ENCODE measurements at regions of chr14 and their contacts with region 1.

Region 1: GRCh38 chr14:60248697-60249318 is at the start of gene PPM1A:
- DNase-seq: peak; percentile 91 to 95 (median 93)
- ATAC-seq: peak; percentile 89
- H3K4me3 ChIP-seq: peak within 1 kb of the TSS; percentile 93
- H3K4me3 Mint-ChIP-seq: peak within 1 kb of the TSS; percentile 90 to 99 (median 96)
- H3K27ac ChIP-seq: peak within 1 kb of the TSS; percentile 100
- H3K27ac Mint-ChIP-seq: peak within 1 kb of the TSS; percentile 97 to 100 (median 100)
- H3K4me1 ChIP-seq: peaks cover 7 to 44% of the 10 kb centered on the region in 2 donors
- H3K4me1 Mint-ChIP-seq: peaks cover 40 to 58% (median 50%) of the 10 kb centered on the region in 7 donors
- H3K27me3 ChIP-seq: no peaks in the 10 kb centered on the region
- H3K27me3 Mint-ChIP-seq: no peaks in the 10 kb centered on the region
- total RNA-seq, gene PPM1A: 42.0 to 71.4 (median 47.3) TPM

Region 2: DNA sequence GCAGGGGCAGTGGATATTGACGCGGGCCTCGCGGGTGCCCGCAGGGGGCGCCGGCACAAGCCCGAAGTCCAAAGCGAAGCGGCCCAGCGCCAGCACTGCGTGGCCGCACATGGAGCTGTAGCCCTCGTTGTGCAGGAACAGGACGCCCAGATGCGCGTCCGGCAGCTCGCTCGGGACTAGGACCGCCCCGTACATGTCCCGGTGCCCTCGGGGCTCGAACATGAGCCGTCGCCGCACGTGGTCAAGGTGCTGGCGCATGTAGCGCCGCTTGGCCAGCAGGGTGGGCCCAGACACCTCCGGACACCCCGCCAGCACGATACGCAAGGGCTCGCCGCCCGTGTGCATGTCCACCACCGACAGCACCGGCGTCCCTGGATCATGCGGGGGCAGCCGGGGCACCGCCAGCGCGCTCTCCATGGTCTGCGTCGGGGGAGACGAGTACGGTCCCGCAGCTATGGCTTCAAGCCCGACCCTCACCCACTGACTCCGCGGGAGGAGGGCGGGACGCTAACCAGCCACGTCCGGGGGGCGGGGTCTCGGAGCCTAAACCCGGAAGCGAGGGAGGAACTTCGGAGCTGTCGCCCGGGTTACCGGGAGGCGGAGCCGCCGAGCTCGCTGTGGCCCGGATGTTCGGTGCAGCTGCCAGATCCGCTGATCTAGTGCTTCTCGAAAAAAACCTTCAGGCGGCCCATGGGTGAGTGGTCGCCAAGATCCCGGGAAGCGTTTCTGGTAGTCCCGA is 764.7 kb before region 1 on chr14 and contains the starts of genes JKAMP and L3HYPDH:
- CTCF ChIA-PET with region 1: no interaction called
- POLR2A ChIA-PET with region 1: interaction called, 5 read pairs
- intact Hi-C with region 1: loop called (anchors 1 kb)
- DNase-seq: peak; percentile 93 to 98 (median 97)
- ATAC-seq: peak; percentile 97
- H3K4me3 ChIP-seq: peak within 1 kb of the TSS; percentile 81
- H3K4me3 Mint-ChIP-seq: peak within 1 kb of the TSS; percentile 89 to 98 (median 96)
- H3K27ac ChIP-seq: peak within 1 kb of the TSS; percentile 84
- H3K27ac Mint-ChIP-seq: peak within 1 kb of the TSS; percentile 85 to 96 (median 94)
- H3K4me1 ChIP-seq: peaks cover 18 to 20% of the 10 kb centered on the region in 2 donors
- H3K4me1 Mint-ChIP-seq: peaks cover 44 to 82% (median 76%) of the 10 kb centered on the region in 7 donors
- H3K27me3 ChIP-seq: no peaks in the 10 kb centered on the region
- H3K27me3 Mint-ChIP-seq: no peaks in the 10 kb centered on the region
- total RNA-seq, gene JKAMP: 12.2 to 33.7 (median 32.5) TPM
- total RNA-seq, gene L3HYPDH: 18.9 to 55.9 (median 24.2) TPM

Region 3: GRCh38 chr14:60184146-60184904 is 64.5 kb before region 1 on chr14:
- CTCF ChIA-PET with region 1: interaction called, 12 read pairs
- POLR2A ChIA-PET with region 1: interaction called, 9 read pairs
- intact Hi-C with region 1: loop called (anchors 1 kb)
- DNase-seq: peak in 7 of 9 donors; percentile 59 to 80 (median 71)
- ATAC-seq: peak; percentile 85
- H3K4me3 ChIP-seq: peak overlapping the region; percentile 48
- H3K4me3 Mint-ChIP-seq: peak overlapping the region; percentile 73 to 84 (median 80)
- H3K27ac ChIP-seq: peak overlapping the region; percentile 66
- H3K27ac Mint-ChIP-seq: peak overlapping the region; percentile 34 to 94 (median 78)
- H3K4me1 ChIP-seq: peaks cover 0 to 6% of the 10 kb centered on the region in 2 donors
- H3K4me1 Mint-ChIP-seq: peaks cover 4 to 15% (median 9%) of the 10 kb centered on the region in 7 donors
- H3K27me3 ChIP-seq: no peaks in the 10 kb centered on the region
- H3K27me3 Mint-ChIP-seq: peaks cover 0 to 4% (median 0%) of the 10 kb centered on the region in 5 donors

Region 4: GRCh38 chr14:60294411-60295069 is 45.7 kb after region 1 on chr14:
- CTCF ChIA-PET with region 1: interaction called, 5 read pairs
- POLR2A ChIA-PET with region 1: no interaction called
- intact Hi-C with region 1: loop called (anchors 2 to 5 kb)
- DNase-seq: no peak
- ATAC-seq: no peak
- H3K4me3 ChIP-seq: no peak overlapping the region
- H3K4me3 Mint-ChIP-seq: no peak overlapping the region
- H3K27ac ChIP-seq: no peak overlapping the region
- H3K27ac Mint-ChIP-seq: no peak overlapping the region
- H3K4me1 ChIP-seq: no peaks in the 10 kb centered on the region
- H3K4me1 Mint-ChIP-seq: peaks cover 0 to 6% (median 0%) of the 10 kb centered on the region in 7 donors
- H3K27me3 ChIP-seq: no peaks in the 10 kb centered on the region
- H3K27me3 Mint-ChIP-seq: no peaks in the 10 kb centered on the region

Region 5: GRCh38 chr14:61280526-61281185 is 1031.8 kb after region 1 on chr14:
- CTCF ChIA-PET with region 1: no interaction called
- POLR2A ChIA-PET with region 1: interaction called, 4 read pairs
- intact Hi-C with region 1: loop called in 1 of 2 experiments (anchors 1 kb)
- DNase-seq: peak; percentile 59 to 83 (median 79)
- ATAC-seq: peak; percentile 92
- H3K4me3 ChIP-seq: peak overlapping the region; percentile 87
- H3K4me3 Mint-ChIP-seq: peak overlapping the region; percentile 89 to 97 (median 91)
- H3K27ac ChIP-seq: peak overlapping the region; percentile 77
- H3K27ac Mint-ChIP-seq: peak overlapping the region; percentile 83 to 95 (median 93)
- H3K4me1 ChIP-seq: peaks cover 0 to 10% of the 10 kb centered on the region in 2 donors
- H3K4me1 Mint-ChIP-seq: peaks cover 18 to 54% (median 35%) of the 10 kb centered on the region in 7 donors
- H3K27me3 ChIP-seq: no peaks in the 10 kb centered on the region
- H3K27me3 Mint-ChIP-seq: peaks cover 0 to 52% (median 0%) of the 10 kb centered on the region in 5 donors

Region 6: GRCh38 chr14:61694830-61695694 is 1446.3 kb after region 1 on chr14 and contains the start of gene HIF1A:
- CTCF ChIA-PET with region 1: no interaction called
- POLR2A ChIA-PET with region 1: no interaction called
- intact Hi-C with region 1: loop called (anchors 2 to 10 kb)
- DNase-seq: peak; percentile 83 to 98 (median 96)
- ATAC-seq: peak; percentile 97
- H3K4me3 ChIP-seq: peak within 1 kb of the TSS; percentile 92
- H3K4me3 Mint-ChIP-seq: peak within 1 kb of the TSS; percentile 95 to 99 (median 98)
- H3K27ac ChIP-seq: peak within 1 kb of the TSS; percentile 99
- H3K27ac Mint-ChIP-seq: peak within 1 kb of the TSS; percentile 96 to 99 (median 99)
- H3K4me1 ChIP-seq: peaks cover 9 to 17% of the 10 kb centered on the region in 2 donors
- H3K4me1 Mint-ChIP-seq: peaks cover 36 to 69% (median 62%) of the 10 kb centered on the region in 7 donors
- H3K27me3 ChIP-seq: no peaks in the 10 kb centered on the region
- H3K27me3 Mint-ChIP-seq: peaks cover 0 to 2% (median 0%) of the 10 kb centered on the region in 5 donors
- total RNA-seq, gene HIF1A: 88.8 to 358 (median 143) TPM

Measured in naive thymus-derived CD4-positive, alpha-beta T cell (primary cell).